ENCODE measurements at regions of chr7 and their contacts with region 1.

Region 1: DNA sequence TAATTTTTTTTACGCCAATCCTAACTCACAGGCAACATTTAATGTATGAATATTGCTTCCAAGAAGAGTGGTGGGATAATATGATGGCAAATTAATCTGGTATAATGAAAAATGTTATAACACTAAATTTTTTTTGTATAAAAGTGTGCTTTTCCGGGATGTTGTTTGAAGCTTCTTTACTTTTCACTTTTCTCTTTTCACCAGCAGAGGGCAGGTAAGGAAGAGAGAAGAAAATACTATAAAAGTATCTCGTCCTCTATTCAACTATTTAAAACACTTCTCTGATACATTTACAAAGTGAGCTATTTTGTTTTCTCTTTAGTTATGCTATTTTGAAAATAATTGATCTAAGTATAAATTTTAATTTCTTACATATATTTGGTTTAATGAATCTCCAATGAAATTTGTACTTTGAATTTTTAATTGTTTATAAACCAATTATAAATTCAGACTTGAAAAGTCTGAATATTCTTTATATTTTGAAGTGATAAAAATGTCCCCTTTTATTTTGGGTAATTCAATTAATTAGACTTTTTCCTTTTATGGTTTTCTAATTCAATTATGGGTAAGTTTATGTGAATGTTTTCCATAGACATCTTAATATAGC is 20.7 kb upstream of the CFTR start:
- DNase-seq: peak; percentile 56
- ATAC-seq: no peak
- H3K4me3 ChIP-seq: no peak overlapping the region
- H3K27ac ChIP-seq: no peak overlapping the region
- H3K4me1 ChIP-seq: no peaks in the 10 kb centered on the region
- H3K27me3 ChIP-seq: peaks cover 4% of the 10 kb centered on the region; the same call in 1 of the 2 replicates
- CTCF ChIP-seq: peak; percentile 69

Region 2: GRCh38 chr7:117673839-117674238 is 214.8 kb after region 1 on chr7:
- CTCF ChIA-PET with region 1: interaction called, 3 read pairs
- POLR2A ChIA-PET with region 1: no interaction called
- intact Hi-C with region 1: loop called (anchors 1 kb)
- DNase-seq: peak; percentile 71
- ATAC-seq: peak; percentile 75
- H3K4me3 ChIP-seq: no peak overlapping the region
- H3K27ac ChIP-seq: no peak overlapping the region
- H3K4me1 ChIP-seq: peaks cover 13% of the 10 kb centered on the region; the same call in 1 of the 2 replicates
- H3K27me3 ChIP-seq: peaks cover 34% of the 10 kb centered on the region
- CTCF ChIP-seq: peak; percentile 63

Region 3: DNA sequence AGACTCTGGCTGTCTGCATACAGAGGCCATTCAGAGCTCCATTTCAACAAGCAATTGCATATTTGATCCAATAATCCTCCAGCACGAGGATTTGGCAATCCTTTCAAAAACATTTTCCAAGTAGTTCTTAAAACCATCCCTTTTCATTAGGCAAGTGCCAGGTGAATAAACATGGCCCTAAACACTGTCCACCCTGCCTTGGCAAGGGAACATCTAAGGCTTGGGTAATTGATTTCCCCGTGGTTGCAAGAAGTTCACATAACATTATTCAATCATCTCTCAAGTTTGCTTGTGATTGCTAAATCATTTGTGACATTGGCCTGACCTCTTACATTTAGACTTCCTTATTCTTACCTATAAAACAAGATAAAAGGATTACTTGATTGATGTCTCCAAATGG is 238.9 kb after region 1 on chr7:
- CTCF ChIA-PET with region 1: no interaction called
- POLR2A ChIA-PET with region 1: no interaction called
- intact Hi-C with region 1: no loop called
- DNase-seq: no peak
- ATAC-seq: no peak
- H3K4me3 ChIP-seq: no peak overlapping the region
- H3K27ac ChIP-seq: no peak overlapping the region
- H3K4me1 ChIP-seq: no peaks in the 10 kb centered on the region
- H3K27me3 ChIP-seq: no peaks in the 10 kb centered on the region
- CTCF ChIP-seq: no peak

Region 4: GRCh38 chr7:117715784-117716445 is 256.8 kb after region 1 on chr7:
- CTCF ChIA-PET with region 1: interaction called, 12 read pairs
- POLR2A ChIA-PET with region 1: no interaction called
- intact Hi-C with region 1: loop called (anchors 1 kb)
- DNase-seq: peak; percentile 72
- ATAC-seq: peak; percentile 81
- H3K4me3 ChIP-seq: no peak overlapping the region
- H3K27ac ChIP-seq: no peak overlapping the region
- H3K4me1 ChIP-seq: no peaks in the 10 kb centered on the region
- H3K27me3 ChIP-seq: 0 out of 2 replicates have a peak, but pooled peaks cover 3% of the 10 kb centered on the region
- CTCF ChIP-seq: peak; percentile 73

Region 5: GRCh38 chr7:118153551-118154177 is 694.6 kb after region 1 on chr7:
- CTCF ChIA-PET with region 1: interaction called, 3 read pairs
- POLR2A ChIA-PET with region 1: no interaction called
- intact Hi-C with region 1: loop called (anchors 10 kb)
- DNase-seq: peak; percentile 67
- ATAC-seq: no peak
- H3K4me3 ChIP-seq: no peak overlapping the region
- H3K27ac ChIP-seq: no peak overlapping the region
- H3K4me1 ChIP-seq: no peaks in the 10 kb centered on the region
- H3K27me3 ChIP-seq: no peaks in the 10 kb centered on the region
- CTCF ChIP-seq: peak; percentile 79

Measured in PC-3 (cell line).